OCI-LY7 (cell line): ENCODE measurements at regions of chr4 and their contacts with region 1.

Region 1: GRCh38 chr4:70687821-70688794 is at the start of gene UTP3:
- DNase-seq: peak; percentile 96
- H3K4me3 ChIP-seq: peak within 1 kb of the TSS; percentile 88
- H3K27ac ChIP-seq: peak within 1 kb of the TSS; percentile 84
- H3K4me1 ChIP-seq: peaks cover 60% of the 10 kb centered on the region
- CTCF ChIP-seq: peak; percentile 99
- total RNA-seq, gene UTP3: 34.0 and 51.5 TPM in 2 replicates

Region 2: GRCh38 chr4:70601422-70602039 is 86.6 kb before region 1 on chr4:
- CTCF ChIA-PET with region 1: no interaction called
- POLR2A ChIA-PET with region 1: interaction called, 4 read pairs
- intact Hi-C with region 1: loop called (anchors 1 kb)
- DNase-seq: peak; percentile 90
- H3K4me3 ChIP-seq: no peak overlapping the region
- H3K27ac ChIP-seq: no peak overlapping the region
- H3K4me1 ChIP-seq: peaks cover 7% of the 10 kb centered on the region
- CTCF ChIP-seq: peak; percentile 99

Region 3: GRCh38 chr4:70651864-70652506 is 36.1 kb before region 1 on chr4:
- CTCF ChIA-PET with region 1: interaction called, 3 read pairs
- POLR2A ChIA-PET with region 1: interaction called, 837 read pairs
- intact Hi-C with region 1: loop called (anchors 2 kb)
- DNase-seq: peak; percentile 62
- H3K4me3 ChIP-seq: no peak overlapping the region
- H3K27ac ChIP-seq: peak overlapping the region; percentile 20
- H3K4me1 ChIP-seq: peaks cover 30% of the 10 kb centered on the region
- CTCF ChIP-seq: peak; percentile 79

Region 4: GRCh38 chr4:70666369-70666768 is 21.7 kb before region 1 on chr4 and contains the start of gene JCHAIN:
- CTCF ChIA-PET with region 1: no interaction called
- POLR2A ChIA-PET with region 1: interaction called, 837 read pairs
- intact Hi-C with region 1: loop called (anchors 1 kb)
- DNase-seq: peak; percentile 70
- H3K4me3 ChIP-seq: peak within 1 kb of the TSS; percentile 98
- H3K27ac ChIP-seq: peak within 1 kb of the TSS; percentile 91
- H3K4me1 ChIP-seq: peaks cover 60% of the 10 kb centered on the region
- CTCF ChIP-seq: no peak
- total RNA-seq, gene JCHAIN: 1,460 and 1,542 TPM in 2 replicates

Region 5: GRCh38 chr4:70839589-70840093 is 151.5 kb after region 1 on chr4 and contains the start of gene GRSF1:
- CTCF ChIA-PET with region 1: no interaction called
- POLR2A ChIA-PET with region 1: no interaction called
- intact Hi-C with region 1: loop called (anchors 5 kb)
- DNase-seq: peak; percentile 97
- H3K4me3 ChIP-seq: peak within 1 kb of the TSS; percentile 73
- H3K27ac ChIP-seq: peak within 1 kb of the TSS; percentile 76
- H3K4me1 ChIP-seq: peaks cover 41% of the 10 kb centered on the region
- CTCF ChIP-seq: peak; percentile 21; the same call in 1 of the 2 replicates
- total RNA-seq, gene GRSF1: 32.8 and 36.7 TPM in 2 replicates